Right cardiac atrium (tissue), 5 donors: ENCODE measurements at regions of chr2 and their contacts with region 1.

Region 1: DNA sequence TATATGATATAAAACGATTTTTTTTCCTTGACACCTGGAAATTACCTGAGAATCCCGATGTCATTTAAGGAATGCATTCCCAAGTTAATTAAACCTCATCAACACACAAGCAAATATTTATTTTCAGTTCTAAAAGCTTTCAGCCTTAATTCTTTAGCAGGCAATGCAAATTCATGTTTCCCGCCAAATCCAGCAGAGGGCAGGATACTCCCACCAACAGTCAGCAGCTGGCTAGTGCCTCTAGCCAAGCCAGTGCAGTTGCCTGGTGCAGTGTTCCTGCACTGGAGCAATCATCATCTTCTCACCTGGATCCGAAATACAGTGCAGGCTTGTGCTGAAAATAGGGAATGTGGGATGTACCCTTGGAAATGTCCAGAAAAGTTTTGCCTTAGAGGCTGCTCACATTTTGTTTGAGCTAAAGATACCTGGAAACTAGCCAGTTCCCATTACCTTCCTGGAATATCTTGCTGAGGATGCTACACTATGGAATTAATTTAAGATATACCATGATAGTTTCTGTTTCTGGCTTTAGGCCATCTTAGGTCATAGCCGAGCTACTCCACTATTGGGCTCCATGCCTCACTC is 48.4 kb upstream of the CYTIP start:
- DNase-seq: peak; percentile 60 to 85 (median 67)
- ATAC-seq: peak; percentile 72 to 81
- H3K4me3 ChIP-seq: no peak overlapping the region
- H3K27ac ChIP-seq: no peak overlapping the region
- H3K4me1 ChIP-seq: no peaks in the 10 kb centered on the region
- H3K27me3 ChIP-seq: no peaks in the 10 kb centered on the region

Region 2: DNA sequence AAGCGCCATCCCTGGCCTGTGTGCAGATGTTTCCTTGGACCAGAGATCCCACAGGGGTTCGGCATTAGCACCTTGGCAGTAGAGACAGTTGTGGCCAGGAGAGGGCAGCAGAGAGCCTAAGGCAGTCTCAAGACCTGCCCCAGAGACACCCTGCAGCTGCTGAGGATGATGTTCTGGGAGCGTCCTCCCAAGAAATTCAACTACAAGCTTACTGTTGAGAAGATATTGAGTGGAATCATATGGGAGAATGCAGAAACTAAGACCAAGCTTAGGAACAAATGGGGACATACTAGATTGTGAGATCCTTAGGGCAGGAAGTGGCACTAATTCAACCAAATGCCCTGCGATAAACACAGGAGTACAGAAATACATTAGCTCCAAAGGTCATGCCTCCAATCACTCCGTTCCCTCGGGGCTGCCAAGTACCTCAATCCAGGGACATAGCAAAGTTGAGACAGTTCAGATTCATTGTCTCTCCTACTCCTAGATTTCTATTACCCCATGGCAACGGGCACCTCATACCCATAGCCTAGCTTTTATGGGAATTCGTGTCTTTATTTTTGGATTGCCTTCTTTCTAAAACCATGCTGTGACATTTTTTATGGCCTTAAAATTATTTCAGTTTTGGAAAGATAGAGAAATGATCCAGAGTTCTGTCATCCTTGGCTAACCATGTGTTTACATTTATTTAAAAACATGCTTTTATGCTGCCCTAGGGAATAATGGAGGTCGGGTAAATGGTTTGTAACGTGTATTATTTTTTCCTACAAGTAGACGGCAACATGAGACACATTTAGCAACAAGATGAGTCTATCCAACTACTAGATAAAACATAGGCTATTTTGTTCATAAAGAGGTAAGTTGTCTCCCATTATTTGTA is 164.4 kb before region 1 on chr2:
- intact Hi-C with region 1: loop called in 2 of 4 experiments (anchors 5 to 10 kb)
- DNase-seq: peak; percentile 82 to 94 (median 89)
- ATAC-seq: peak; percentile 91
- H3K4me3 ChIP-seq: no peak overlapping the region
- H3K27ac ChIP-seq: no peak overlapping the region
- H3K4me1 ChIP-seq: peaks cover 3% of the 10 kb centered on the region
- H3K27me3 ChIP-seq: no peaks in the 10 kb centered on the region

Region 3: GRCh38 chr2:157538064-157538463 is 45.8 kb after region 1 on chr2:
- intact Hi-C with region 1: no loop called
- DNase-seq: no peak
- ATAC-seq: no peak
- H3K4me3 ChIP-seq: no peak overlapping the region
- H3K27ac ChIP-seq: no peak overlapping the region
- H3K4me1 ChIP-seq: no peaks in the 10 kb centered on the region
- H3K27me3 ChIP-seq: no peaks in the 10 kb centered on the region